ENCODE measurements at regions of chr19 and their contacts with region 1.

Region 1: GRCh38 chr19:1791879-1792278 is 20.2 kb downstream of the ATP8B3 start:
- DNase-seq: no peak
- ATAC-seq: no peak
- H3K4me3 ChIP-seq: no peak overlapping the region
- H3K27ac ChIP-seq: no peak overlapping the region
- H3K4me1 ChIP-seq: no peaks in the 10 kb centered on the region; the same call in 1 of the 2 replicates
- H3K27me3 ChIP-seq: no peaks in the 10 kb centered on the region
- CTCF ChIP-seq: peak; percentile 35

Region 2: GRCh38 chr19:1445185-1445931 is 346.5 kb before region 1 on chr19:
- CTCF ChIA-PET with region 1: interaction called, 10 read pairs
- POLR2A ChIA-PET with region 1: no interaction called
- in situ Hi-C with region 1: no loop called
- intact Hi-C with region 1: no loop called
- DNase-seq: no peak
- ATAC-seq: peak; percentile 81
- H3K4me3 ChIP-seq: peak overlapping the region; percentile 47 to 52
- H3K27ac ChIP-seq: peak overlapping the region; percentile 89
- H3K4me1 ChIP-seq: peaks cover 41% of the 10 kb centered on the region
- H3K27me3 ChIP-seq: no peaks in the 10 kb centered on the region
- CTCF ChIP-seq: peak; percentile 98

Region 3: DNA sequence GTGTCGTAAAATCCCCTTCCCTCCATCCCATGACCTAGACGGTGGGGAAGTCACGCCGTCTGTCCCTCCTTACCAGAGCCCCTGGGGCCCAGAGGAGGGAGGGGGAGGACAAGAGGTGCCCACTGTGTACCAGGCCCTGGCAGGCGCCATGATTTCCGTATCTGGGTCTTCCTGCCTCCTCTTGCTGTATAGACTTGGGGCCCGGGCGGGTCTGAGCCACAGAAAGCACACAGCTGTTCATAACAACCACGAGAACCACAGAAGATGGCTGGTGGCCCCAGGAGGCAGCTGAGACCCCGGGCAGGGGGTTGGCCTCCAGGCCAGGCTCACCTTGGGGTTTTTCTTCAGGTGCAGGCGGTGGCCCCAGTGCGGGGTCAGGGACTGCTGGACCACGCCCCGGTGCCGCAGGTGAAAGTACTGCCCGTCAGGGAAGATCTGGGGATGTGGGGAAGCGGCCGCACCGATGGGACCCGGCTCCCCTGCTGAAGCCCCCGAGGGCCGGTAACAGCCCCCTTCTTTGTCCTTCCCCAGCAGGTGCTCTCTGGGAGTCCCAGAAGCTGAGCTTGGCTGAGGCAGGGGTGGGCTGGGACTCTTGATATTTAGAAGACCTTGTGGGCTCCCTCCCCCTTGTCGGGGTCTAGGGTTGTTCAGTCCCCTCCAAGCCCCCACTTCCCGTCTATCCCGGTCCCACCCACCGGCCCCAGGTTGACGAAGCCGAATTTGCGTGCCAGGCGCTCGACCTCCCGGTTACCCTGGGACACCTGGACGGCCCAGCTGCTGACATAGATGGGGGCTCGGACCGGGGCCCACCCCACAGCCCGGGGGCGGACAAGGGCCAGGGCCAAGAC is 302.2 kb before region 1 on chr19:
- CTCF ChIA-PET with region 1: no interaction called
- POLR2A ChIA-PET with region 1: no interaction called
- in situ Hi-C with region 1: no loop called
- intact Hi-C with region 1: no loop called
- DNase-seq: no peak
- ATAC-seq: no peak
- H3K4me3 ChIP-seq: peak overlapping the region; percentile 55 to 65
- H3K27ac ChIP-seq: peak overlapping the region; percentile 79
- H3K4me1 ChIP-seq: no peaks in the 10 kb centered on the region; the same call in 1 of the 2 replicates
- H3K27me3 ChIP-seq: no peaks in the 10 kb centered on the region
- CTCF ChIP-seq: no peak

Region 4: GRCh38 chr19:1747285-1748114 is 44.4 kb before region 1 on chr19:
- CTCF ChIA-PET with region 1: no interaction called
- POLR2A ChIA-PET with region 1: no interaction called
- in situ Hi-C with region 1: no loop called
- intact Hi-C with region 1: no loop called
- DNase-seq: peak; percentile 96
- ATAC-seq: peak; percentile 76
- H3K4me3 ChIP-seq: peak overlapping the region; percentile 37 to 49
- H3K27ac ChIP-seq: peak overlapping the region; percentile 95
- H3K4me1 ChIP-seq: peaks cover 45% of the 10 kb centered on the region
- H3K27me3 ChIP-seq: no peaks in the 10 kb centered on the region
- CTCF ChIP-seq: no peak